ENCODE measurements at regions of chr15 and their contacts with region 1.

Region 1: DNA sequence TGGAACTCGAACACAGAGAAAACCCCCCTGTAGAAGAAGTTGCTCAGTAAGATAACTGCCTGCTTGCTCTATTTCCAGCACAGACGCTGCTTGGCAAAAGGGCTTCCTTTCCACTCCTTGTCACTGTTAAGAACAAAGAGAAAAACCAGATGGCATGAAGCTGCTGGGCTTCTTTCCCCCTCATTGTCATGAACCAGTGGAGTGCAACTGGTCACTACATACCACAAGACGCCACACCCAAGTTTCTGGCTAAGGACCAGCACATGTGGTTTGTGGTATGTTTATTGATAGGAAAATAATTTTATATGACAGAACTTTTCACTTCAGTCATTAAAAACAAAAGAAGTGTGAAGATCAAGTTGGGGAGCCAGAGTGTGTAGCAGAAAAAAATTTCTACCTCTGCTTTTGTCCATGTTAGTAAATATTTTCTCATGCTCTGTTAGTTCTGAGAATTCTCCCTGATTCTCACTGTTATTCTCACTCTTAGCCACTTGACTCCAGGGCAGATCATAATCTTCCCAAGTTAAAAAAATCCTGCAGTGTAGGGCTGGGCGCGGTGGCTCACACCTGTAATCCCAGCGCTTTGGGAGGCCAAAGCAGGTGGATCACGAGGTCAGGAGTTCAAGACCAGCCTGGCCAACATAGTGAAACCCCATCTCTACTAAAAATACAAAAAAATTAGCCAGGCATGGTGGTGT is 37.9 kb downstream of the CLK3 start:
- DNase-seq: no peak
- H3K4me3 ChIP-seq: no peak overlapping the region
- H3K4me1 ChIP-seq: no peaks in the 10 kb centered on the region
- H3K27me3 ChIP-seq: no peaks in the 10 kb centered on the region

Region 2: DNA sequence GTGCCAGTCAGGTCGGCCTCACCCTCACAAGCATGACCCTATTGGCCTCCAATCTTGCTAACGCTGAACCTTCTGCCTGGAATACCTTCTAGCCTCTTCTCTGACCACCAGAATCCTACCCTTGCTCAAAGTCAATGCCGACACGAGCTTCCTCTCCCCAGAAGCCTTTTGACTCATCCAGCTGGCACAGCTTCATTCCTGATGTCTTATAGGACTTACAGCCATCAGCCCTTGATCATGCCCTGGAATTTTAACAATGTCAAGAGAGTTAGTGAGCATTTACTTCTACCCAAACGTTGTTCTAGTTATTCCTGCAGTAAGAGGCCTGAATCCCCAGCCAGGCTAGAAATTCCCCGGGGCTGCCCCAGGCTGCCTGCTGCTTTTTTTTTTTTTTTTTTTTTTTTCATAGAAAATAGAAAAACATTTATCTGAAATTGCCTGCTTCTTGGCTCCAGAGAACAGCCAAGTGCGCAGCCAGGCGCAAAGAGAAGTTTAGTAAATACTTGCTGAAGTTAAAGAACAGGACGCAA is 99.0 kb after region 1 on chr15:
- in situ Hi-C with region 1: loop called (anchors 10 kb)
- DNase-seq: no peak
- H3K4me3 ChIP-seq: no peak overlapping the region
- H3K4me1 ChIP-seq: no peaks in the 10 kb centered on the region
- H3K27me3 ChIP-seq: peaks cover 2% of the 10 kb centered on the region; the same call in 1 of the 2 replicates

Measured in HAP-1 (cell line).